Activated naive CD4-positive, alpha-beta T cell treated with anti-CD3 and anti-CD28 coated beads for 36 hours (primary cell): ENCODE measurements at regions of chr19 and their contacts with region 1.

Region 1: GRCh38 chr19:33143897-33144405 is 12.0 kb downstream of the WDR88 start:
- DNase-seq: peak; percentile 69
- H3K4me3 Mint-ChIP-seq: no peak overlapping the region
- H3K27ac Mint-ChIP-seq: no peak overlapping the region
- H3K4me1 Mint-ChIP-seq: peaks cover 4% of the 10 kb centered on the region
- H3K27me3 Mint-ChIP-seq: no peaks in the 10 kb centered on the region

Region 2: DNA sequence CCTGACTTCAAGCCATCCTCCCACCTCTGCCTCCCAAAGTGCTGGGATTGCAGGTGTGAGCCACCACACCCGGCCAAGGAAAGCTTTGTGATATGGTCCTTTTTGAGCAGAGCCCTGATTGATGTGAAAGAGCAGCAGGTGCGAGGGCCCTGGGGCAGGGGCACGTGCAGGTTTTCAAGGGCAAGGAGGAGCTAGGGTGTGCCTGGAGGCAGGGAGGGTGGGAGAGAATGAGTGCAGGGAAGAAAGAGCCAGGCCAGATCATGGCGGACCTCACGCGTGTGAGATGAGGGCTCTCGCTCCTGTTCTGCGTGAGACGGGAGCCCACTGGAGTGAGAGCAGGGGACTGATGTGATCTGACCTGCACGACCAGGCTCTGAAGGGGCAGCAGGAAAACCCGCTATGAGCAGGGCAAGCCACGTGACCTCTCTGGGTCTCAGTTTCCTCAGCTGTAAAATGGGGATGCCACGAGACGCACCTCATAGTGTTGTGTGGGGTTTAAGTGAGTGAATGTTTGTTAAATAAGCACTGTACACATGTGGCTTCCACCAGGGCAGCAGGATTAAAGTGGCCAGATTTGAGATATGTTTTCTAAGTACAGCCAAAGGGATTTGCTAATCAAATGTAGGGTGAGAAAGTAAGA is 146.1 kb before region 1 on chr19:
- CTCF ChIA-PET with region 1: no interaction called
- intact Hi-C with region 1: no loop called
- DNase-seq: no peak
- H3K4me3 Mint-ChIP-seq: no peak overlapping the region
- H3K27ac Mint-ChIP-seq: no peak overlapping the region
- H3K4me1 Mint-ChIP-seq: peaks cover 6% of the 10 kb centered on the region
- H3K27me3 Mint-ChIP-seq: no peaks in the 10 kb centered on the region

Region 3: DNA sequence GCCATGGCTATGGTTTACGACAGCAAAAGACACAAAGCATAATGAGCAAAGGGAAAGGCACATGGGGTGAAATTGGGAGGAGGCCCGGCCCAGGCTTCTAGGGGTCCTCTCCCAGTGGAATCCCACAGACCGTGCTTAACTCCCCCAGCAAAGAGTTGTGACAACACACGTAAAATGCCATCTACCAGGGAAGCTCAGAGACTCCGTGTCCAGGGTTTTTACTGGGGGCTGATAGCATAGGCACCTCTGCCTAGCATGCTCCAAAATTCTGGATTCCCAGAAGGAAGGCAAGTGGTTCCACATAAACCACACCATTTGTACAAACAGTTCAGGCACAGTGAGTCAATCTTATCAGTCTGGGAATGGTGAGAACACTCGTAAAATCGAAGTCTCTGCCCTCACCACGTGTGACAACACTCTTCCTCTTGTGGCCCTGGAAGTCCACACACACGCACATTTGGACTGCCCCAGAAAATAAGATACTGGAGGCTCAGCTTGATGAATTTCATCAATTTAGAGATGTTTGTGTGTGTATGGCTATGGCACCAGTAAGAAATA is 114.1 kb before region 1 on chr19:
- CTCF ChIA-PET with region 1: no interaction called
- intact Hi-C with region 1: no loop called
- DNase-seq: no peak
- H3K4me3 Mint-ChIP-seq: no peak overlapping the region
- H3K27ac Mint-ChIP-seq: no peak overlapping the region
- H3K4me1 Mint-ChIP-seq: no peaks in the 10 kb centered on the region
- H3K27me3 Mint-ChIP-seq: peaks cover 6% of the 10 kb centered on the region

Region 4: DNA sequence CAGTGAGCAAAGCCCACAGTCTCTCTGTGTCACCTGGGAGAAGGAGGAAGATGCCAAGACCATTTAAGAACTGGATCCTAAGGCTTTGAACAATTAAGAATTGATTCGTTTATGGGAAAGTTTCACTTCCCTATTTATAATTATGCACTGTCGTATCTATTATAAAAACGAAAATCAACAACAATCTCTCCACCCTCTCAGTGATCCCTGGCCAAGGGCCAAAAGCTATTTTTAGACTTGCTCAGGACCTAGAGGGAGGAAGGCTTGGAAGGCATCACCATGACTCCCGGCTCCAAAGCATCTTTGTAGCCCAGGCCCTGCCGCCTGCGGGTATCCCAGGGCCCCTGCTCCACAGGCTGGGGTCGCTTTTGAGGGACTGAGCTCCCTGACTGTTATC is 80.6 kb before region 1 on chr19:
- CTCF ChIA-PET with region 1: no interaction called
- intact Hi-C with region 1: no loop called
- DNase-seq: no peak
- H3K4me3 Mint-ChIP-seq: no peak overlapping the region
- H3K27ac Mint-ChIP-seq: no peak overlapping the region
- H3K4me1 Mint-ChIP-seq: peaks cover 2% of the 10 kb centered on the region
- H3K27me3 Mint-ChIP-seq: peaks cover 26% of the 10 kb centered on the region

Region 5: DNA sequence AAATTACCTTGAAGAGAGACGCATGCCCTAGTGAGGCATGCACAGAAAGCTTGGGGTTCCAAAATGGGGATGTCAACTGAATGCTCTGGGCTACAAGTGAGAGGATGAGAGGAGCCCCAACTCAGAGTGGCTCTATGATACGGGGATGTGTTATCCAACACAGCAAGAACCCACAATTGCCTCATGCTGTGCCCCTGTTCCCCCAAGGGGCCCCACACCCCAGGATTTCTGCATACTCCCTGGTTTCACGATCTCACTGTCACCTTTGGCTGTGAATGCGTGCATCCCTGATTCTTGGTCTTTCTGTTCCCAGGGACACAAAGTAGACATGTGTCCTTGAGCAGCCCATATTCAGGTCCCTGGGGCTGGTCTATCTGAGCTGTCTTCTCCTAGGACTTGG is 17.2 kb after region 1 on chr19:
- CTCF ChIA-PET with region 1: interaction called, 20 read pairs
- intact Hi-C with region 1: no loop called
- DNase-seq: no peak
- H3K4me3 Mint-ChIP-seq: no peak overlapping the region
- H3K27ac Mint-ChIP-seq: peak overlapping the region; percentile 50
- H3K4me1 Mint-ChIP-seq: peaks cover 27% of the 10 kb centered on the region
- H3K27me3 Mint-ChIP-seq: no peaks in the 10 kb centered on the region

Region 6: DNA sequence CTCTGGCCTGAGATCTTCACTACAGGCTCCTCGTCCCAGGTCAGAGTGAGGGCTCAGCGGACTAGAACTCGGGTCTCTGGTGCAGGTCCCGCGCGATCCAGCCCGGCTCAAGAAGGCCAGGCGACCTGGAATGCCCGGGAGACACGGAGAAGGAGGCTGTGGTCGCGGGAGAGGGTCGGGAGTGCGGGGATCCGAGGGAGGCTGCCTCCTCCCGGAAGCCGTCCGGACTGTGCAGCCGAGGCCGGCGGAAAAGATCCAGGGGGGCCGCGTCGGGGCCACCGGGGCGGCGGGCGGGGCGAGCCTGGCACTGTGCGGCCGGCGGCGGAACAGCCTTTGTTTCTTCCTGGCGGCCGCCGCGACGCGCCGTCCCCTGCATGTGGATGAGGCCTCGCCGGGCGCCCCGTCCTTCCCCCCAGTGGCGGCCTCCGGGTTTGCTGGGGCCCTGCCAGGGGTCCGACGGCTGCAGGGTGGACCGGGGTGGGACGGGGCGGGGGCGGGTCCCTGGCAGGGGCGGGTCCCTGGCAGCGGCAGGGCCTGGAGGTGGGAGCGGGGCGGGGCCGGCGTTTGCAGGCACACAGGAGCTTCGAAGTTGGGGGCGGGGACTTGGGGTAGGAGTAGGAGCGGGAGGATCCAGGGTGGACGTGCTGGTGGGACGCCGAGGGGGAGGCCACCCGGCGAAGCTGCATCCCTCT is 82.7 kb after region 1 on chr19:
- CTCF ChIA-PET with region 1: interaction called, 3 read pairs
- intact Hi-C with region 1: loop called (anchors 5 kb)
- DNase-seq: no peak
- H3K4me3 Mint-ChIP-seq: peak overlapping the region; percentile 49
- H3K27ac Mint-ChIP-seq: no peak overlapping the region
- H3K4me1 Mint-ChIP-seq: peaks cover 10% of the 10 kb centered on the region
- H3K27me3 Mint-ChIP-seq: peaks cover 60% of the 10 kb centered on the region